ENCODE measurements at regions of chr12 and their contacts with region 1.

Region 1: GRCh38 chr12:113334786-113335540 is at the start of gene SLC8B1:
- DNase-seq: peak; percentile 93
- ATAC-seq: peak; percentile 95
- H3K4me3 ChIP-seq: peak within 1 kb of the TSS; percentile 77
- H3K27ac ChIP-seq: no peak within 1 kb of the TSS
- H3K4me1 ChIP-seq: peaks cover 15% of the 10 kb centered on the region
- H3K27me3 ChIP-seq: no peaks in the 10 kb centered on the region
- CTCF ChIP-seq: no peak
- total RNA-seq, gene SLC8B1: 34.1 and 50.2 TPM in 2 replicates

Region 2: GRCh38 chr12:113221181-113221997 is 113.6 kb before region 1 on chr12 and contains the start of gene TPCN1:
- CTCF ChIA-PET with region 1: no interaction called
- POLR2A ChIA-PET with region 1: interaction called, 10 read pairs
- intact Hi-C with region 1: no loop called
- DNase-seq: peak; percentile 100
- ATAC-seq: peak; percentile 90
- H3K4me3 ChIP-seq: peak within 1 kb of the TSS; percentile 79
- H3K27ac ChIP-seq: peak within 1 kb of the TSS; percentile 82
- H3K4me1 ChIP-seq: peaks cover 27% of the 10 kb centered on the region
- H3K27me3 ChIP-seq: no peaks in the 10 kb centered on the region
- CTCF ChIP-seq: no peak
- total RNA-seq, gene TPCN1: 19.0 and 29.3 TPM in 2 replicates

Region 3: GRCh38 chr12:113358381-113359132 is 23.6 kb after region 1 on chr12 and contains the start of gene PLBD2:
- CTCF ChIA-PET with region 1: no interaction called
- POLR2A ChIA-PET with region 1: no interaction called
- intact Hi-C with region 1: loop called (anchors 1 kb)
- DNase-seq: peak; percentile 93
- ATAC-seq: peak; percentile 91
- H3K4me3 ChIP-seq: peak within 1 kb of the TSS; percentile 86
- H3K27ac ChIP-seq: peak within 1 kb of the TSS; percentile 13; the same call in 1 of the 2 replicates
- H3K4me1 ChIP-seq: peaks cover 12% of the 10 kb centered on the region
- H3K27me3 ChIP-seq: no peaks in the 10 kb centered on the region
- CTCF ChIP-seq: no peak
- total RNA-seq, gene PLBD2: 18.8 and 38.1 TPM in 2 replicates

Region 4: DNA sequence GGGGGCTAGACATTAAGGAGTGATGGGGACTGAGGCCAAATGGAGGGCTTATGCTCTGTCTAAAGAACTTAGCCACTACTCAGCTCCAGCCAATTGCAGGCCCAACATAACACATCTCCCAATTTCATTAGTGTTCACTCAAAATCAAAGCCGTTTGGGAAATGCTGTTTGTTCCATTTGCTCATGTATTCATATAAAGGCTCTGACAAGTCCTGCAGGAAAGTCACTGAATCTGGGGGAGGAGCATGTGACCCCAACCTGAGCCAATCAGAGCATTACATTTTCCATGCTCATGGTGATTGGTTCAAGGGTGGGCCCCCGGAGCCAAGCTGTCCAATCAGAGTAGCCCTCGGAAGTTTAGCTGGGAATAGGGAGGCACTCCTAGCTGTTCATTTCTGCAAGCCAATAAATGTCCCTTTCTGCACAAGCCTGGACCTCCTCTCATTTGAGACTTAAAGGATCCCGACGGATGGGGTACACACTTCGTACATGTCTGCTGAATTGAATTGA is 108.1 kb after region 1 on chr12:
- CTCF ChIA-PET with region 1: no interaction called
- POLR2A ChIA-PET with region 1: interaction called, 17 read pairs
- intact Hi-C with region 1: no loop called
- DNase-seq: no peak
- ATAC-seq: no peak
- H3K4me3 ChIP-seq: no peak overlapping the region
- H3K27ac ChIP-seq: no peak overlapping the region
- H3K4me1 ChIP-seq: no peaks in the 10 kb centered on the region
- H3K27me3 ChIP-seq: no peaks in the 10 kb centered on the region
- CTCF ChIP-seq: no peak

Region 5: GRCh38 chr12:113894697-113895096 is 559.7 kb after region 1 on chr12:
- CTCF ChIA-PET with region 1: no interaction called
- POLR2A ChIA-PET with region 1: interaction called, 18 read pairs
- intact Hi-C with region 1: no loop called
- DNase-seq: no peak
- ATAC-seq: no peak
- H3K4me3 ChIP-seq: no peak overlapping the region
- H3K27ac ChIP-seq: no peak overlapping the region
- H3K4me1 ChIP-seq: no peaks in the 10 kb centered on the region
- H3K27me3 ChIP-seq: no peaks in the 10 kb centered on the region
- CTCF ChIP-seq: no peak

Region 6: DNA sequence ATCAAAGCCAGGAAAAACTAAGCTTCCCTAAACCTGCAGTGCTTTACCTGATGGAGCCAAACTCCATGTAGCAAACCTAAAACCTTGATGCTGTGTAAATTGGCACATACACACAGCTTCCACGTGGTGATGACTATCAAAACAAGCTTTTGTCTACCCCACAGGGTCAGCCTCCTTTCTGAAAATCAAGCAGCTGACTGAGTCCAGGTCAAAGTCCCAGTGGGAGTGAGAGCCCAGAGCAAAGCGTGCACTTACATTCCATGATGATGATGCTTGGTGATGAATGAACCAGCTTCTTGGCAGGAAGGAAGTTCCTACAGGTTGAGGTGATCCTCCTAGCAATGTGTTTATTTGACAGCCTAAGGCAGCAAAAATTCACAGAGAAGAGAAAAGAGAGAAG is 1979.0 kb after region 1 on chr12:
- CTCF ChIA-PET with region 1: no interaction called
- POLR2A ChIA-PET with region 1: interaction called, 16 read pairs
- intact Hi-C with region 1: no loop called
- DNase-seq: peak; percentile 97
- ATAC-seq: peak; percentile 87
- H3K4me3 ChIP-seq: no peak overlapping the region
- H3K27ac ChIP-seq: peak overlapping the region; percentile 58
- H3K4me1 ChIP-seq: peaks cover 37% of the 10 kb centered on the region
- H3K27me3 ChIP-seq: no peaks in the 10 kb centered on the region
- CTCF ChIP-seq: no peak

Measured in PC-3 (cell line).